Activated CD4-positive, alpha-beta T cell treated with anti-CD3 and anti-CD28 coated beads for 36 hours (primary cell): ENCODE measurements at regions of chr3 and their contacts with region 1.

Region 1: DNA sequence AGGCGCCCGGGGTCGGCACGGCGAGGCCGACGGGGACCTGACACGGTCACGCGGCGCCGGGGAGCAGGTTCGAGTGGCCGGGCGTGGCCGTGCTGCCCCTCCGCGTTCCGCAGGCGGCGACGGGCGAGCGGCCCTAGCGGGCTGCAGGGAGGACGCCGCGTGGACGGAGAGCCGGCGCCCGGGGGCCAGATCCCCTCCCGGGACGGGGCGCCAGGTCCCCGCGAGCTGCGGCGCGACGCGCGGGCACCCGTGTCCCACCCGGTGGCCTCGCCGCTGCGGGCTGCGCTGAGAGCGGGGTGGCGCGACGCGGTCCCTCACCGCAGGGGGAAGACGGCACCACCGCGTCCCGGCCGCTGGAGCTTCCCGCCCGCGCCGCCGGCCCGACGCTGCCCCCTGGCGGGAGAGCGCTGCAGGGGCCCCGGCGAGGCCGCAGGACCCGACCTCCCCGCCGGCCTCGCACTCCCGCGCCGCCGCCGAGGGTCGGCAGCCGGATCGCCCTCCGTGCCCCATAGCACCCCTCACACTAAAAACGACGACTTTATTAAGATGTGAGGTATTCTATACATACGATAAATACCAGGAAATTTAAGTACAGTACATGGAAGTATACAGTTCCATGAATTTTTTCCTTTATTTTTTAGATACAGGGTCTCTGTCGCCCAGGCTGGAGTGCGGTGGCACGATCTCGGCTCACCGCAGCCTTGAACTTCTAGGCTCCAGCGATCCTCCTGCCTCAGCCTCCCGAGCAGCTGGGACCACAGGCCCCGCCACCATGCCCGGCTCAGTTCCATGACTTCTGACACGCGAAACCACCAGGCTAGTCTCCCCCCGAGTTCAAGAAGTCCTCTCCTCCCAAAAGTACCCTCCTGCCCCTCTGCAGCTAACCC is 1.3 kb upstream of the PIGZ start:
- DNase-seq: peak; percentile 80
- ATAC-seq: peak; percentile 65
- H3K4me3 Mint-ChIP-seq: peak overlapping the region; percentile 63
- H3K27ac Mint-ChIP-seq: peak overlapping the region; percentile 31
- H3K4me1 Mint-ChIP-seq: peaks cover 15% of the 10 kb centered on the region
- H3K27me3 Mint-ChIP-seq: peaks cover 11% of the 10 kb centered on the region

Region 2: GRCh38 chr3:196837819-196838420 is 132.0 kb before region 1 on chr3:
- CTCF ChIA-PET with region 1: interaction called, 11 read pairs
- POLR2A ChIA-PET with region 1: no interaction called
- intact Hi-C with region 1: loop called (anchors 1 kb)
- DNase-seq: peak; percentile 87
- ATAC-seq: peak; percentile 94
- H3K4me3 Mint-ChIP-seq: no peak overlapping the region
- H3K27ac Mint-ChIP-seq: no peak overlapping the region
- H3K4me1 Mint-ChIP-seq: no peaks in the 10 kb centered on the region
- H3K27me3 Mint-ChIP-seq: no peaks in the 10 kb centered on the region